IMR-90 (cell line): ENCODE measurements at regions of chr3 and their contacts with region 1.

Region 1: GRCh38 chr3:133805527-133806475 is at the start of gene SRPRB:
- DNase-seq: peak; percentile 92
- ATAC-seq: peak; percentile 100
- H3K4me3 ChIP-seq: peak within 1 kb of the TSS; percentile 76
- H3K27ac ChIP-seq: peak within 1 kb of the TSS; percentile 60; the same call in 1 of the 2 replicates
- H3K4me1 ChIP-seq: no peaks in the 10 kb centered on the region
- H3K27me3 ChIP-seq: 0 out of 2 replicates have a peak, but pooled peaks cover 2% of the 10 kb centered on the region
- CTCF ChIP-seq: no peak
- POLR2A ChIP-seq: peak; percentile 84
- RAD21 ChIP-seq: no peak
- total RNA-seq, gene SRPRB: 98.9 and 131 TPM in 2 replicates

Region 2: DNA sequence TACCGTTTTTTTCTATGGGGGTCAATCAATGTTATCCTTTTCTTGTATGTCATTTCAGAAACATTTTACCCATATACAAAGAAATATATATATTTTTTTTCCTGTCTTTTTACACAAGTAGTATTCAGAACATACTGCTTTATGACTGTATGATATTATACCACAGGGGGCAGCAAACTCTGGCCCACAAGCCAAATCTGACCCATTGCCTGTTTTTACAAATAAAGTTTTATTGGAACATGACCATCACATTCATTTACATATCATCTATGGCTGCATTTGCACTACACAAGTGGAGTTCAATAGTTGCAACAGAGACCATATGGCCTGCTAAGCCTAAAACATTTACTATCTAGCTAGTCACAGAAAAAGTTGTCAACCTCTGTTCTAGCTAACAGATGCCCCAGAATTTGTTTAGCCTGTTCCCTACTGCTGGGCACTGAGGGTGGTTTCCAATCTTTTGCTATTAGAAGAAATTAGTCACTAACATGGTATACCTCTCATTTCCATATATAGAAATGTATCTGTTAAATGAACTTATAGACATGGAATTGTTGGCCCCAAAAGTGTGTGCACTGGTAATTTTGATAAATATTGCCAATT is 348.2 kb before region 1 on chr3:
- CTCF ChIA-PET with region 1: no interaction called
- POLR2A ChIA-PET with region 1: no interaction called
- dilution Hi-C with region 1: no loop called
- in situ Hi-C with region 1: loop called (anchors 25 kb)
- intact Hi-C with region 1: loop called (anchors 10 kb)
- DNase-seq: no peak
- ATAC-seq: no peak
- H3K4me3 ChIP-seq: no peak overlapping the region
- H3K27ac ChIP-seq: no peak overlapping the region
- H3K4me1 ChIP-seq: no peaks in the 10 kb centered on the region; the same call in 1 of the 2 replicates
- H3K27me3 ChIP-seq: peaks cover 6% of the 10 kb centered on the region
- CTCF ChIP-seq: peak; percentile 26
- POLR2A ChIP-seq: no peak
- RAD21 ChIP-seq: peak; percentile 33; the same call in 1 of the 2 replicates

Region 3: DNA sequence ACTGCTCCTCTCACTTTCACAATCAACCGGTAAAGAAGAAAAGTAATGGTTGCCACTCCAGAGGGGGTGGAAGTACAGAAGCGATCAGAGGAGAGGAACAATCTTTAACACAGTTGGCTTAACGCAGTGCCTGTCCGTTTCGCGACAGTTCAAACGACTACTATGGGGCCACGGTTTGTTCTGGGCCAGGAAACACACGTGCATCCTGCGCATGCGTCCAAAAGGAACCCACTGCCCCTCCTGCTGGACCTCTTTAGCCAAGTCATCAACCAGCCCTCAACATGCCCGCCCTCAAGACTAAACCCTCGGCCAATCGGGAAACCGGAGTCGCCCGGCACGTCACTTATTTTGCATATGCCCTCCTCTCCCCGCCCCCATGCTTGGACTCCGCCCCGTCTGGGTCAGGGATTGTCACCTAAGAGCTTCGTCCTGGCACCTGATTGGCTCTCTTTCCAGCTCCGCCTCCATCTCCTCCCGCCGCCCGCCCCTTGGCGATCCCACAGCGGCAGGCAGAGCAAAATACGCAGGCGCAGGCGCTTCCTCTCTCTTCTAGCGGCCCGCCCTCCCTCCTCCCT is 232.7 kb before region 1 on chr3:
- CTCF ChIA-PET with region 1: no interaction called
- POLR2A ChIA-PET with region 1: no interaction called
- dilution Hi-C with region 1: no loop called
- in situ Hi-C with region 1: no loop called
- intact Hi-C with region 1: loop called (anchors 10 kb)
- DNase-seq: peak; percentile 100
- ATAC-seq: peak; percentile 85
- H3K4me3 ChIP-seq: peak overlapping the region; percentile 75
- H3K27ac ChIP-seq: peak overlapping the region; percentile 76
- H3K4me1 ChIP-seq: peaks cover 15% of the 10 kb centered on the region
- H3K27me3 ChIP-seq: no peaks in the 10 kb centered on the region
- CTCF ChIP-seq: peak; percentile 22
- POLR2A ChIP-seq: no peak
- RAD21 ChIP-seq: no peak

Region 4: GRCh38 chr3:133591271-133591742 is 214.5 kb before region 1 on chr3:
- CTCF ChIA-PET with region 1: no interaction called
- POLR2A ChIA-PET with region 1: no interaction called
- dilution Hi-C with region 1: no loop called
- in situ Hi-C with region 1: no loop called
- intact Hi-C with region 1: no loop called
- DNase-seq: peak; percentile 43
- ATAC-seq: peak; percentile 54
- H3K4me3 ChIP-seq: no peak overlapping the region
- H3K27ac ChIP-seq: no peak overlapping the region
- H3K4me1 ChIP-seq: peaks cover 2% of the 10 kb centered on the region; the same call in 1 of the 2 replicates
- H3K27me3 ChIP-seq: no peaks in the 10 kb centered on the region
- CTCF ChIP-seq: no peak
- POLR2A ChIP-seq: no peak
- RAD21 ChIP-seq: no peak

Region 5: GRCh38 chr3:133758964-133759739 is 46.6 kb before region 1 on chr3:
- CTCF ChIA-PET with region 1: no interaction called
- POLR2A ChIA-PET with region 1: no interaction called
- dilution Hi-C with region 1: no loop called
- in situ Hi-C with region 1: no loop called
- intact Hi-C with region 1: loop called (anchors 1 kb)
- DNase-seq: no peak
- ATAC-seq: no peak
- H3K4me3 ChIP-seq: no peak overlapping the region
- H3K27ac ChIP-seq: no peak overlapping the region
- H3K4me1 ChIP-seq: no peaks in the 10 kb centered on the region
- H3K27me3 ChIP-seq: peaks cover 14% of the 10 kb centered on the region
- CTCF ChIP-seq: no peak
- POLR2A ChIP-seq: no peak
- RAD21 ChIP-seq: no peak

Region 6: DNA sequence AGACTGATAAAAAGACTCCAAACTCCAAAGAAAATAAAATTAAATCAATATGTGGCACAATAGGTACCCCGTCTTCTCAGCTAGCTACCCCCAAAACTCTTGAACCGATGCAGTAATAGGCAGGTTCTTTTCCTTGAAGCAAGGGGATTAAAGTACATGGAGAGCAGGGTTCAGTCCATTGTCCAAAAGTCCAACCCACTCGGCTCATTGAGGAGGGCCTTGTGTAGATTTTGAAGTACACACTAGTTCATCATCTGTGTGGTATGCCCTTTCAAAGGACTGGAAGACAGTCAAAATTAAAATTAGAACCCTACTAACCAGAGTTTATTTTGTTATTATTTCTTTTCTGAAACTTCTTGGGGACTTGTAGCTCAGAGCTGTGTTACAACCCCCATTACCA is 36.3 kb before region 1 on chr3:
- CTCF ChIA-PET with region 1: no interaction called
- POLR2A ChIA-PET with region 1: no interaction called
- dilution Hi-C with region 1: no loop called
- in situ Hi-C with region 1: no loop called
- intact Hi-C with region 1: no loop called
- DNase-seq: no peak
- ATAC-seq: no peak
- H3K4me3 ChIP-seq: no peak overlapping the region
- H3K27ac ChIP-seq: no peak overlapping the region
- H3K4me1 ChIP-seq: no peaks in the 10 kb centered on the region
- H3K27me3 ChIP-seq: peaks cover 6% of the 10 kb centered on the region
- CTCF ChIP-seq: no peak
- POLR2A ChIP-seq: no peak
- RAD21 ChIP-seq: no peak

Region 7: DNA sequence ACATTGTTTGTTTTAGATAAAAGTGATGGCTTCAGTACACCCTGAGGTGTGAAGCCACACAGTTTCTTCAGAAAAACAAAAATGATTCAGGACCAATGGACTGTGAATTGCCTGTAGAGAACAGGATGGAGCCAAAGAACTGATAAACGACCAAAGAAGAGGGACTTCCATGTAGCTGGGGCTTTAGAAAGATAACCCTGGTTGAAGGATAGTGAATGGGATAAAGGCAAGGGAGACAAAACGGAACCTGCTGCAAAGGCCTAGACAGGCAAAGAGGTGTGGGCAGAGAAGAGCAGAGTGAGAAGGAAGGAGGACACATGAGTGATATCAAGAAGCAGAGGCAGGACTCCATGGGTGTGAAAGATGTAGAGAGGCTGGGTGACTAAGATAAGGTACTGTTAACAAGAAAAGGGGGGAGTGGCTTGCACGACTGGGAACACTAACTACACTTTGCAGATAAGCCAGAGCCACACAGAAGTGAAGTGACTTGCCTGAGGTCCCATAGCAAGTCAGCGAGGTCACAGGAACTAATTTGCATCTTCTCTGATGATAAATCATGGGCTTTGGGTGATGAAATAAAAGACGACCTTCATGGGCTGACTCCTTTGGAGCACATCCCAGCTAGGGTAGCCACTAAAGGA is 45.6 kb after region 1 on chr3:
- CTCF ChIA-PET with region 1: no interaction called
- POLR2A ChIA-PET with region 1: no interaction called
- dilution Hi-C with region 1: no loop called
- in situ Hi-C with region 1: no loop called
- intact Hi-C with region 1: no loop called
- DNase-seq: no peak
- ATAC-seq: no peak
- H3K4me3 ChIP-seq: no peak overlapping the region
- H3K27ac ChIP-seq: no peak overlapping the region
- H3K4me1 ChIP-seq: no peaks in the 10 kb centered on the region
- H3K27me3 ChIP-seq: peaks cover 27% of the 10 kb centered on the region
- CTCF ChIP-seq: no peak
- POLR2A ChIP-seq: no peak
- RAD21 ChIP-seq: no peak